B cell (primary cell): ENCODE measurements at regions of chr3 and their contacts with region 1.

Region 1: GRCh38 chr3:48635222-48636021 is at the start of gene SLC26A6:
- DNase-seq: peak; percentile 89
- ATAC-seq: peak; percentile 98
- H3K4me3 ChIP-seq: peak within 1 kb of the TSS; percentile 48 to 84 (median 77)
- H3K4me3 Mint-ChIP-seq: peak within 1 kb of the TSS; percentile 89
- H3K27ac ChIP-seq: peak within 1 kb of the TSS in 1 of 2 donors; percentile 49
- H3K27ac Mint-ChIP-seq: peak within 1 kb of the TSS; percentile 61
- H3K4me1 ChIP-seq: peaks cover 11 to 17% of the 10 kb centered on the region in 2 donors
- H3K4me1 Mint-ChIP-seq: peaks cover 13% of the 10 kb centered on the region
- H3K27me3 ChIP-seq: no peaks in the 10 kb centered on the region
- H3K27me3 Mint-ChIP-seq: no peaks in the 10 kb centered on the region
- CTCF ChIP-seq: peak; percentile 28
- total RNA-seq, gene SLC26A6: 26.7 and 30.6 TPM in 2 replicates

Region 2: DNA sequence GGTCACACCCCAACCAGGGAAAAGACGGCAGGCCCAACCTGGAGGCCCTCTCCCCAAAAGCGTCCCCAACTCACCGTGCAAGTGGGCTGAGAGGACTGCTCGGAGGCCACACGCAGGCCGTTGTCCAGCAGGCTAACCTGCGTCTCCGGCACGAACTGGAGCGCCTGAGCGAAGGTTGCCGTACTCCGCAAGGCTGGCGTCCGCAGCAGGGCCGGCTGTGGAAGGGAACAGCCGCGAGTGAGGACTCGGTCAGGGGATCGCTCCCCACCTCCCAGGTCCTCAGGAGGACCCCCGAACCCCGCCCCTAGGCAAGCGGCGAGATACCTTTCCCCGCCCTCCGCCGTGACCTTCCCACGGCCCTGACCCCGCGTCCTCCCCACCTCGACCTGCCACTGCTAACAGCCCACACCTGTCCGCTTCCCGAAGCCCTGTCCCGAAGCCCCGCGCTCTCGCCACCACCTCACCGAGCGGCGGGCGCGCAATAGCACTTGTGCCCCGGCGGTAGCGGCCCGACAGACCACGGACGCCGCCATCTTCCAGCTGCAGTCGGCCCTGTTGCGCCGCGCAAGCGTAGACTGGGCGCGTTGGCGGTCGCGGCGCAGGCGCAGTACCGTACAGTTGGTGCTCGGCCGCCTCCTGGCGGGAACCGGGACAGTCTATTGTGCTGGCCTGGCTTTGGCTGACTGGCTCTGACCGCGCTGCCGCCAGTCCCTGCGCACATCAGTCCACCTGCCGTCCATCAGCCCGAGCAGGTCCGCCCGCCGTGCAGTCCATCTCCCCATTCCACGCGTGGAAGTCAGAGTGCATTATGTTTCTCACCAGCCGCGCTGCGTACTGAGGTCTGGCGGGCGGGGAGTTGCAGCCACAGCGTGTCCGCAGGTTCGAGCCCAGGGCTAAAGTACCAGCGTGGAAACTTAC is 26.1 kb before region 1 on chr3 and contains the start of gene UQCRC1:
- CTCF ChIA-PET with region 1: interaction called, 5 read pairs
- POLR2A ChIA-PET with region 1: interaction called, 9 read pairs
- intact Hi-C with region 1: loop called (anchors 1 kb)
- DNase-seq: peak; percentile 95
- ATAC-seq: peak; percentile 99
- H3K4me3 ChIP-seq: peak within 1 kb of the TSS; percentile 68 to 99 (median 94)
- H3K4me3 Mint-ChIP-seq: peak within 1 kb of the TSS; percentile 100
- H3K27ac ChIP-seq: peak within 1 kb of the TSS; percentile 72 to 90
- H3K27ac Mint-ChIP-seq: peak within 1 kb of the TSS; percentile 98
- H3K4me1 ChIP-seq: peaks cover 10 to 14% of the 10 kb centered on the region in 2 donors
- H3K4me1 Mint-ChIP-seq: peaks cover 15% of the 10 kb centered on the region
- H3K27me3 ChIP-seq: no peaks in the 10 kb centered on the region
- H3K27me3 Mint-ChIP-seq: no peaks in the 10 kb centered on the region
- CTCF ChIP-seq: peak; percentile 81
- total RNA-seq, gene UQCRC1: 98.9 and 99.9 TPM in 2 replicates

Region 3: DNA sequence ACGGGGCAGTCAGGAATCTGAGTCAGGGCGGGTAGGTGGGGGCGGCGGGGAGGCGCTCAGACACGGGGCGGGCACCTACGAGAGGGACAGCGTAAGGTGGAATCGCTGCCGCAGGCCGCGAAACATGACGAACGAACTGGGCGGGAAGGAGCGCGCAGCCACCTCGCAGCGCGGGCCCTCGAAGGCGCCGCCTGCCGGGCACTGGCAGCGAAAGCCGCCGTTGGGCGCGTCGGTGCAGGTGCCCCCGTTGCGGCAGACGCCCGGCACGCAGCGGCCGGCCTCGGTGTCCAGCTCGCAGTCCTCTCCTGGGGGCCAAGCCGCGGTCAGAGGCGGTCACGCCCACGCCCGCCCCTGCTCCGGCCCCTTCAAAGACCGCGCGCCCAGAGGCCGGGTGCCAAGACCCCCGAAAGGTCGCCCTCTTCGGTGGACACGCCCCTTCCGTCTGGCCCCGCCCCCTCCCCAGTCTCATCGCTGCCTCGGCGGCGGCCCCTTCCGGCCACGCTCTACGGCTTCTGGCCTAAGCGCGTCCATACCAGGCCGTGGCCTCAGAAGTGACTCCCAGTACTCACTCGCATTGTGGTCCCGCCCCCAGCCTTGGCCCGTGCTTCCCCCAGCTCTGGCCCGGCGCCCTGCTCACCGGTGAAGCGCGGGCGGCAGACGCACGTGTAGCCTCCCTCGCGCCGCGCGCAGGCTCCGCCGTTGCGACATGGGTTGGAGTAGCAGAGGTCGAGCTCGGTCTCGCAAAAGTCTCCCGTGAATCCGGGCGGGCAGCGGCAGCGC is 20.8 kb after region 1 on chr3:
- CTCF ChIA-PET with region 1: interaction called, 3 read pairs
- POLR2A ChIA-PET with region 1: no interaction called
- intact Hi-C with region 1: loop called (anchors 1 kb)
- DNase-seq: peak; percentile 89
- ATAC-seq: peak; percentile 79
- H3K4me3 ChIP-seq: peak overlapping the region in 4 of 5 experiments; percentile 44 to 66 (median 62)
- H3K4me3 Mint-ChIP-seq: peak overlapping the region; percentile 83
- H3K27ac ChIP-seq: peak overlapping the region in 1 of 2 donors; percentile 24
- H3K27ac Mint-ChIP-seq: peak overlapping the region; percentile 73
- H3K4me1 ChIP-seq: peaks cover 9 to 22% of the 10 kb centered on the region in 2 donors
- H3K4me1 Mint-ChIP-seq: peaks cover 17% of the 10 kb centered on the region
- H3K27me3 ChIP-seq: peaks cover 0 to 42% (median 6%) of the 10 kb centered on the region in 4 experiments
- H3K27me3 Mint-ChIP-seq: peaks cover 9% of the 10 kb centered on the region
- CTCF ChIP-seq: peak; percentile 83

Region 4: GRCh38 chr3:48663415-48664312 is 28.2 kb after region 1 on chr3:
- CTCF ChIA-PET with region 1: no interaction called
- POLR2A ChIA-PET with region 1: no interaction called
- intact Hi-C with region 1: loop called (anchors 1 kb)
- DNase-seq: peak; percentile 88
- ATAC-seq: peak; percentile 80
- H3K4me3 ChIP-seq: peak overlapping the region in 4 of 5 experiments; percentile 45 to 64 (median 52)
- H3K4me3 Mint-ChIP-seq: peak overlapping the region; percentile 87
- H3K27ac ChIP-seq: peak overlapping the region in 1 of 2 donors; percentile 13
- H3K27ac Mint-ChIP-seq: peak overlapping the region; percentile 71
- H3K4me1 ChIP-seq: peaks cover 28 to 31% of the 10 kb centered on the region in 2 donors
- H3K4me1 Mint-ChIP-seq: peaks cover 23% of the 10 kb centered on the region
- H3K27me3 ChIP-seq: peaks cover 0 to 47% (median 16%) of the 10 kb centered on the region in 4 experiments
- H3K27me3 Mint-ChIP-seq: peaks cover 16% of the 10 kb centered on the region
- CTCF ChIP-seq: peak; percentile 72

Region 5: DNA sequence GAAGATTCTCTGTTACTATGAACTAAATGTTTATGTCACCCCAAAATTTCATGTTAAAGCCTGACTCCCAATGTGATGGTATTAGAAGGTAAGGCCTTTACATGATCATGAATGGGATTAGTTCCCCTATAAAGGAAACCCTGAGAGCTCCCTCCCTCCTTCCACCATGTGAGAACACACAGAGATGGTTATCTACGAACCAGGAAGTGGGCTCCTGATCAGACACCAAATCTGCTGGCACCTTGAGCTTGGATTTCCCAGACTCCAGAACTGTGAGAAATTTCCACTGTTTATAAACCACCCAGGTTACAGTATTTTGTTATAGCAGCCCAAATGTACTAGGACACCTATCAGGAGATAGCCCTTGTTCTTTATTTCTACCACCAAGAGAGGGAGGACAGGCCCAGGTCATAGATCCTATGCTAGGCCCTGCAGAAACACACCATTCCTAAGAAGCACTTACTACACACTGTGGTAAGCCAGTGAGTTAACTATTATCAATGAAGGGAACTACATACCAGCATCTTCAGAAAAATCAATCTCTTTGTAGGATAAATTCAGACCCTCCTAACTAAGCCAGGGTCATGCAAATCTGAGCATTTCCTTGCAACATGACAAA is 153.2 kb after region 1 on chr3:
- CTCF ChIA-PET with region 1: no interaction called
- POLR2A ChIA-PET with region 1: interaction called, 11 read pairs
- intact Hi-C with region 1: no loop called
- DNase-seq: no peak
- ATAC-seq: no peak
- H3K4me3 ChIP-seq: no peak overlapping the region
- H3K4me3 Mint-ChIP-seq: no peak overlapping the region
- H3K27ac ChIP-seq: no peak overlapping the region
- H3K27ac Mint-ChIP-seq: no peak overlapping the region
- H3K4me1 ChIP-seq: no peaks in the 10 kb centered on the region
- H3K4me1 Mint-ChIP-seq: no peaks in the 10 kb centered on the region
- H3K27me3 ChIP-seq: no peaks in the 10 kb centered on the region
- H3K27me3 Mint-ChIP-seq: no peaks in the 10 kb centered on the region
- CTCF ChIP-seq: no peak